ENCODE measurements at regions of chr6 and their contacts with region 1.

Region 1: GRCh38 chr6:127811900-127812570 is 88.8 kb downstream of the THEMIS start:
- DNase-seq: peak in 3 of 9 experiments; percentile 32 to 39 (median 39)
- ATAC-seq: peak; percentile 30
- H3K4me3 ChIP-seq: no peak overlapping the region
- H3K4me3 Mint-ChIP-seq: peak overlapping the region; percentile 50
- H3K27ac ChIP-seq: no peak overlapping the region
- H3K27ac Mint-ChIP-seq: peak overlapping the region; percentile 89
- H3K4me1 ChIP-seq: peaks cover 89% of the 10 kb centered on the region
- H3K4me1 Mint-ChIP-seq: peaks cover 93% of the 10 kb centered on the region
- H3K27me3 ChIP-seq: no peaks in the 10 kb centered on the region
- H3K27me3 Mint-ChIP-seq: no peaks in the 10 kb centered on the region
- CTCF ChIP-seq: no peak

Region 2: GRCh38 chr6:127464881-127465459 is 347.1 kb before region 1 on chr6:
- CTCF ChIA-PET with region 1: no interaction called
- POLR2A ChIA-PET with region 1: no interaction called
- intact Hi-C with region 1: no loop called
- DNase-seq: peak; percentile 17 to 68 (median 50)
- ATAC-seq: peak; percentile 51
- H3K4me3 ChIP-seq: no peak overlapping the region
- H3K4me3 Mint-ChIP-seq: no peak overlapping the region
- H3K27ac ChIP-seq: no peak overlapping the region
- H3K27ac Mint-ChIP-seq: no peak overlapping the region
- H3K4me1 ChIP-seq: no peaks in the 10 kb centered on the region
- H3K4me1 Mint-ChIP-seq: no peaks in the 10 kb centered on the region
- H3K27me3 ChIP-seq: no peaks in the 10 kb centered on the region
- H3K27me3 Mint-ChIP-seq: no peaks in the 10 kb centered on the region
- CTCF ChIP-seq: peak; percentile 72

Region 3: DNA sequence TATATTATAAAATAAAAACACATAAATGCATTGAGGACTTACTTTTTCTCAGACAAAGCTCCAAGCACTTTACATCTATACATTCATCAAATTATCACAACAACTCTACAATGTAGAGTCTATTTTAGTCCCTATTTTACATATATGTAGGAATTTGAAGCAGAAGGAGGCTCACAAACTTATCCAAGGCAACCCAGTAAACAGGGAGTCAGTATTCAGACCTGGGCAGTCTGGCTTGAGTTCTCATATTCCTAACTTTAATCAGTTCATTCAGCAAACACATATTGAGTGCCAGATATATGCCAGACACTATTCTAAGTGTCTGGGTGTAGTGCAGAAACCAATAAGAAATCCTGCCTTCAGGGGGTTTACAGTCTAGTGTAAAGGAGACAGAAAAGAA is 105.8 kb before region 1 on chr6:
- CTCF ChIA-PET with region 1: no interaction called
- POLR2A ChIA-PET with region 1: no interaction called
- intact Hi-C with region 1: no loop called
- DNase-seq: no peak
- ATAC-seq: no peak
- H3K4me3 ChIP-seq: no peak overlapping the region
- H3K4me3 Mint-ChIP-seq: no peak overlapping the region
- H3K27ac ChIP-seq: no peak overlapping the region
- H3K27ac Mint-ChIP-seq: peak overlapping the region; percentile 49
- H3K4me1 ChIP-seq: no peaks in the 10 kb centered on the region
- H3K4me1 Mint-ChIP-seq: peaks cover 3% of the 10 kb centered on the region
- H3K27me3 ChIP-seq: no peaks in the 10 kb centered on the region
- H3K27me3 Mint-ChIP-seq: no peaks in the 10 kb centered on the region
- CTCF ChIP-seq: no peak

Region 4: GRCh38 chr6:127762284-127762683 is 49.8 kb before region 1 on chr6:
- CTCF ChIA-PET with region 1: no interaction called
- POLR2A ChIA-PET with region 1: interaction called, 4 read pairs
- intact Hi-C with region 1: loop called in 1 of 2 experiments (anchors 5 kb)
- DNase-seq: peak in 3 of 9 experiments; percentile 15 to 38 (median 18)
- ATAC-seq: peak; percentile 38
- H3K4me3 ChIP-seq: no peak overlapping the region
- H3K4me3 Mint-ChIP-seq: no peak overlapping the region
- H3K27ac ChIP-seq: peak overlapping the region in 1 of 2 experiments; percentile 10
- H3K27ac Mint-ChIP-seq: peak overlapping the region; percentile 75
- H3K4me1 ChIP-seq: peaks cover 38% of the 10 kb centered on the region
- H3K4me1 Mint-ChIP-seq: peaks cover 62% of the 10 kb centered on the region
- H3K27me3 ChIP-seq: no peaks in the 10 kb centered on the region
- H3K27me3 Mint-ChIP-seq: no peaks in the 10 kb centered on the region
- CTCF ChIP-seq: no peak

Region 5: GRCh38 chr6:127775371-127775770 is 36.7 kb before region 1 on chr6:
- CTCF ChIA-PET with region 1: no interaction called
- POLR2A ChIA-PET with region 1: no interaction called
- intact Hi-C with region 1: loop called in 1 of 2 experiments (anchors 5 kb)
- DNase-seq: no peak
- ATAC-seq: no peak
- H3K4me3 ChIP-seq: no peak overlapping the region
- H3K4me3 Mint-ChIP-seq: no peak overlapping the region
- H3K27ac ChIP-seq: no peak overlapping the region
- H3K27ac Mint-ChIP-seq: peak overlapping the region; percentile 76
- H3K4me1 ChIP-seq: peaks cover 10% of the 10 kb centered on the region
- H3K4me1 Mint-ChIP-seq: peaks cover 72% of the 10 kb centered on the region
- H3K27me3 ChIP-seq: no peaks in the 10 kb centered on the region
- H3K27me3 Mint-ChIP-seq: no peaks in the 10 kb centered on the region
- CTCF ChIP-seq: no peak

Region 6: DNA sequence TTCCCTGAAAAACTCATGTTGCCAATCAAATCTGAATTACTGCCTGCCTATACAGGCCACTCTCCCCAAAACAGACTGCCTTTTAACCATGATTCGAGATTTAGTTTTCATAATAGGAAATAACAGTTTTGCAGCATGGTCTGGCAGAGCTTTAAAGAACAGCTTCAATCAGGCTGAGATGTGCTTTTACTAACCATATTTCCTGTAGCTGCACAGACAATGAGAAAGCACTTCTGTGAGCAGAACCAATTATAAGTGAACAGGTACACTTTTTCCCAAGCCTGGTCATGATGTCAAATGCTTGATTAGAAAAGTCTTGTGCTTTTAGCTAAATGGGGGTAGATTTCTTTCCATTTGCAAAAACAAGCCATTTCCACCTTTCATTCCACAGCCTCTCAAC is 19.4 kb before region 1 on chr6:
- CTCF ChIA-PET with region 1: interaction called, 3 read pairs
- POLR2A ChIA-PET with region 1: no interaction called
- intact Hi-C with region 1: loop called in 1 of 2 experiments (anchors 2 kb)
- DNase-seq: peak in 2 of 9 experiments; percentile 41 to 64
- ATAC-seq: peak; percentile 87
- H3K4me3 ChIP-seq: no peak overlapping the region
- H3K4me3 Mint-ChIP-seq: peak overlapping the region; percentile 48
- H3K27ac ChIP-seq: no peak overlapping the region
- H3K27ac Mint-ChIP-seq: peak overlapping the region; percentile 87
- H3K4me1 ChIP-seq: peaks cover 84% of the 10 kb centered on the region
- H3K4me1 Mint-ChIP-seq: peaks cover 90% of the 10 kb centered on the region
- H3K27me3 ChIP-seq: no peaks in the 10 kb centered on the region
- H3K27me3 Mint-ChIP-seq: no peaks in the 10 kb centered on the region
- CTCF ChIP-seq: no peak

Region 7: DNA sequence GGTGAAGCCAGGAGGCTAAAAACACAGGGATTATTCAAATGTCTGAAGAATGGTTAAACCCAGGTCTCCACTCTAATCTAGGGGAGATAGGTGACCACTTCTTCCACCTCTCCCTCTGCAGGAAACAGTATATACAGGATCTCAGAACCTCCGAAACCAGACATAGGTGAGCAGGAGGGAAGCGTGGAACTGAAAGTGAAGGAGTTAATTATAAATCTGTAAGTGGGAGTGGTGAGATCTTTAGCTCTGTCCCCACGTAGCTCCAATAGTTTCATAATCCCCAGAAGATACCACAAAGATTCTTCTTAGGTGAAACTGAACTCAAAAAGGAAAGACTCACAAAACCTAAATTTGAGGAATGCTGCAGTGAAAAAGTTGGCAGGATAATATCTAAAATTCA is 12.0 kb after region 1 on chr6:
- CTCF ChIA-PET with region 1: no interaction called
- POLR2A ChIA-PET with region 1: no interaction called
- intact Hi-C with region 1: loop called in 1 of 2 experiments (anchors 2 kb)
- DNase-seq: no peak
- ATAC-seq: no peak
- H3K4me3 ChIP-seq: no peak overlapping the region
- H3K4me3 Mint-ChIP-seq: peak overlapping the region; percentile 9
- H3K27ac ChIP-seq: no peak overlapping the region
- H3K27ac Mint-ChIP-seq: peak overlapping the region; percentile 77
- H3K4me1 ChIP-seq: peaks cover 46% of the 10 kb centered on the region
- H3K4me1 Mint-ChIP-seq: peaks cover 80% of the 10 kb centered on the region
- H3K27me3 ChIP-seq: no peaks in the 10 kb centered on the region
- H3K27me3 Mint-ChIP-seq: no peaks in the 10 kb centered on the region
- CTCF ChIP-seq: no peak

Measured in CD8-positive, alpha-beta T cell (primary cell).